ENCODE measurements at regions of chr3 and their contacts with region 1.

Region 1: DNA sequence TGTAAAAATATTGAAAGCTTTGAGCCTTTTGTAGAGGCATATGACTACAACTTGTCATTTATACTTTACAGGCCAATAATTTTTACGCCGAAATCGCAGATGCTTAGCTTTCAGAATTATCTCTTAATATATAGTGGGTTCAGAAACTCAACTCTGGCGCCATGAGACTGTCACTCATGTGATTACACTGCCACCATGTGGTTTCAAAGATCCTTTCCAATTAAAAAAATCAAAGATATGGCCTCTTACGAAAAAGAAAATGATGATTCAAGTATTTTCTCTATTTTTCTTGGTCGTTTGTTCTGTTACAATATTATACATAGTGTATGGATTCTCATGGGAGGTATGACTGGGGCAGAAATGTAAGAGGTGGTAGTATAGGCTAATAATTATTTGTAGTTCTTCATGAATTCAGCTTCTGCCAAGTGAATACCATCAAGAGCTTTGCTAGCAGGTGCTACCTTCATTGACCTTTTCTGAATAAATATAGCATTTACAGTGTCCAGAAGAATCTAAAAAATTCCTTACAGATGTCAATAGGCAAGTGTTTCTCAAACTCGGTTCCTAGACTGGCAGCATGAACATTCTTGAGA is 751.7 kb upstream of the GOLIM4 start:
- DNase-seq: peak; percentile 54
- H3K4me3 Mint-ChIP-seq: no peak overlapping the region
- H3K27ac Mint-ChIP-seq: no peak overlapping the region
- H3K4me1 Mint-ChIP-seq: no peaks in the 10 kb centered on the region
- H3K27me3 Mint-ChIP-seq: peaks cover 79% of the 10 kb centered on the region
- CTCF ChIP-seq: peak; percentile 52

Region 2: GRCh38 chr3:168047190-168047795 is 800.1 kb before region 1 on chr3:
- CTCF ChIA-PET with region 1: interaction called, 4 read pairs
- POLR2A ChIA-PET with region 1: no interaction called
- intact Hi-C with region 1: loop called (anchors 2 kb)
- DNase-seq: peak; percentile 81
- H3K4me3 Mint-ChIP-seq: no peak overlapping the region
- H3K27ac Mint-ChIP-seq: no peak overlapping the region
- H3K4me1 Mint-ChIP-seq: peaks cover 15% of the 10 kb centered on the region
- H3K27me3 Mint-ChIP-seq: no peaks in the 10 kb centered on the region
- CTCF ChIP-seq: peak; percentile 85

Region 3: GRCh38 chr3:168213920-168214319 is 633.5 kb before region 1 on chr3:
- CTCF ChIA-PET with region 1: interaction called, 137 read pairs
- POLR2A ChIA-PET with region 1: interaction called, 13 read pairs
- intact Hi-C with region 1: loop called (anchors 1 kb)
- DNase-seq: no peak
- H3K4me3 Mint-ChIP-seq: no peak overlapping the region
- H3K27ac Mint-ChIP-seq: no peak overlapping the region
- H3K4me1 Mint-ChIP-seq: no peaks in the 10 kb centered on the region
- H3K27me3 Mint-ChIP-seq: peaks cover 40% of the 10 kb centered on the region
- CTCF ChIP-seq: no peak

Region 4: DNA sequence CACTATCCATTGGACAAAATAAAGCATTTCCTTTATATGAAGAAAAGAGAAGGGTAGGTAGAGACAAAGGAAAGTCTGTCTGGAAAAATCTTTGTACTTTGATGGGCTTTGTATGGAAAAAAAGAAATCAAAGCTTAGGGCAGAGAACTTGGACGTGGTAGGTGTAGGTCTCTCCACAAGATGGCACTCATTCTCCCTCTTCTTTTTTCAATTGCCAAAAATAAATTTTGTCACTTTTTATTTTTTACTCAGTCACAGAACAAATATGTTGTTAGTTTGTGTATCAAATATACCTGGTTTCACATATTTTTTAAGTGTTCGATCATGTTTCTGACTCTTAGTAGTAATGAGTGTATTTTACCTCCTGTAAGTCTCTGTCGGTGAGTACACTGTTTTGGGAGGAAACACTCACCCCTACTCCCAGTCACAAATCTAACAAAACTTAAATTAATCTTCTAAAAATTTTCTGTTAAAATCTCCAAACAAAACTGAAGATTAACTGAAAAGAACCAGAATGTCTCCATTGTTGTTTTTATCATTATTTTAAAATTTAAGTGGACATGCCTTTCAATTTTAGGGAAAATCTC is 335.9 kb before region 1 on chr3:
- CTCF ChIA-PET with region 1: interaction called, 9 read pairs
- POLR2A ChIA-PET with region 1: no interaction called
- intact Hi-C with region 1: loop called (anchors 1 kb)
- DNase-seq: peak; percentile 16
- H3K4me3 Mint-ChIP-seq: no peak overlapping the region
- H3K27ac Mint-ChIP-seq: no peak overlapping the region
- H3K4me1 Mint-ChIP-seq: no peaks in the 10 kb centered on the region
- H3K27me3 Mint-ChIP-seq: peaks cover 69% of the 10 kb centered on the region
- CTCF ChIP-seq: peak; percentile 49

Region 5: DNA sequence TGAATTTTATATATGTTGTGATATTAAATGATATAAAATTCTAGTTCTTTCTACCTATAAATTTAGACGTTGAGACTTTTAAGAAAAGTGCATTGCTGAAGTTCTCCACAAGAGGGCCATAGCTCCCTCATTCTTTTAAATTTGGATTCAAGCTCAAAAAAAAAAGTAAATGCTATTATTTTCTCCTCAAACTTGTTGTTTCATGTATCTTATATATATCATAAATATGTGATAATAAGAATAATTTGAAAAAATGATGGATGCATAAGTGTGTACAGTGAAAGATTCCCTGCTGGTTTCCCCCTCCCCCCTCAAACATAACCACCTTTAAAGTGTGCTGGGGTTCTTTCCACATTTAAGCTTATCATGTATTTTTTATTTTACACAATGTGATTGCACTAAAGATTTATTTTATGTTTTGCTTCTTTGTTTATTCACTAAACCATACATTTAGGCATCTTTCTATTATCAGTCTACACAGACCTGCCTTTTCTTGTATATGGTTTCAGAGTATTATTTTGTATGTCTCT is 17.7 kb after region 1 on chr3:
- CTCF ChIA-PET with region 1: interaction called, 19 read pairs
- POLR2A ChIA-PET with region 1: interaction called, 3 read pairs
- intact Hi-C with region 1: no loop called
- DNase-seq: peak; percentile 41
- H3K4me3 Mint-ChIP-seq: no peak overlapping the region
- H3K27ac Mint-ChIP-seq: no peak overlapping the region
- H3K4me1 Mint-ChIP-seq: no peaks in the 10 kb centered on the region
- H3K27me3 Mint-ChIP-seq: peaks cover 59% of the 10 kb centered on the region
- CTCF ChIP-seq: peak; percentile 65

Region 6: GRCh38 chr3:169165196-169166158 is 318.1 kb after region 1 on chr3:
- CTCF ChIA-PET with region 1: no interaction called
- POLR2A ChIA-PET with region 1: no interaction called
- intact Hi-C with region 1: no loop called
- DNase-seq: no peak
- H3K4me3 Mint-ChIP-seq: no peak overlapping the region
- H3K27ac Mint-ChIP-seq: no peak overlapping the region
- H3K4me1 Mint-ChIP-seq: peaks cover 4% of the 10 kb centered on the region
- H3K27me3 Mint-ChIP-seq: no peaks in the 10 kb centered on the region
- CTCF ChIP-seq: no peak